Activated CD8-positive, alpha-beta T cell treated with anti-CD3 and anti-CD28 coated beads, Interleukin-2, amount 10 ng/mL, durations not matched to agents 7 days and 5 days (primary cell): ENCODE measurements at regions of chr11 and their contacts with region 1.

Region 1: GRCh38 chr11:129992161-129992944 is 10.3 kb downstream of the PRDM10 start:
- DNase-seq: peak; percentile 53
- ATAC-seq: peak; percentile 68
- H3K4me3 Mint-ChIP-seq: no peak overlapping the region
- H3K27ac Mint-ChIP-seq: no peak overlapping the region
- H3K4me1 Mint-ChIP-seq: peaks cover 8% of the 10 kb centered on the region
- H3K27me3 Mint-ChIP-seq: no peaks in the 10 kb centered on the region

Region 2: DNA sequence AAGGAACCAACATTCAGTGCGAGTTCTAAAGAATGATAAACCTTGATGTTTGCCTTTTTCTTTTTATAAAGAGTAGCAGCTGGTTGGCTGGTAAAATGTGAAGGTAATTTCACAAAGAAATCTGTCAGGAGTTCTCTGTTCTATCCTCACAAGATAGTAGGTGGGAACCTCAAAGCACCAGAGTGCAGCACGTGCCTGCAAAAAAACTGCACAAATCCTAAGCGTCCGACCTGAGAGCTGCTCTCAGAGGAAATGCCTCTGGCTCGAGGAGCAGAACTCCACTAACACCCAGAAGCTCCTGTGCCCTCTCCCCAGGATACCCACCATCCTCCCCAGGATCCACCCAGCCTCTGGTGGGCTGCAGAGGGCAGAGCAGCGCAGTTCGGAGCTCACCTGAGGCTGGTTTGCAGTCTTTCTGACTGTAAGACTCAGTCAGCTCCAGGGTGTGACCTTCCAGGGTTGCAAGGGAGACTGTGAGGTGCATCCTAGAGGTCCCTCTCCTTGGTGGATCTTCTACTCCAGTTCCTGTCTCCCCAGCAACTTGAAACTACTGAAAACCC is 13.2 kb before region 1 on chr11:
- CTCF ChIA-PET with region 1: interaction called, 19 read pairs
- POLR2A ChIA-PET with region 1: no interaction called
- DNase-seq: no peak
- ATAC-seq: no peak
- H3K4me3 Mint-ChIP-seq: no peak overlapping the region
- H3K27ac Mint-ChIP-seq: no peak overlapping the region
- H3K4me1 Mint-ChIP-seq: no peaks in the 10 kb centered on the region
- H3K27me3 Mint-ChIP-seq: no peaks in the 10 kb centered on the region

Region 3: DNA sequence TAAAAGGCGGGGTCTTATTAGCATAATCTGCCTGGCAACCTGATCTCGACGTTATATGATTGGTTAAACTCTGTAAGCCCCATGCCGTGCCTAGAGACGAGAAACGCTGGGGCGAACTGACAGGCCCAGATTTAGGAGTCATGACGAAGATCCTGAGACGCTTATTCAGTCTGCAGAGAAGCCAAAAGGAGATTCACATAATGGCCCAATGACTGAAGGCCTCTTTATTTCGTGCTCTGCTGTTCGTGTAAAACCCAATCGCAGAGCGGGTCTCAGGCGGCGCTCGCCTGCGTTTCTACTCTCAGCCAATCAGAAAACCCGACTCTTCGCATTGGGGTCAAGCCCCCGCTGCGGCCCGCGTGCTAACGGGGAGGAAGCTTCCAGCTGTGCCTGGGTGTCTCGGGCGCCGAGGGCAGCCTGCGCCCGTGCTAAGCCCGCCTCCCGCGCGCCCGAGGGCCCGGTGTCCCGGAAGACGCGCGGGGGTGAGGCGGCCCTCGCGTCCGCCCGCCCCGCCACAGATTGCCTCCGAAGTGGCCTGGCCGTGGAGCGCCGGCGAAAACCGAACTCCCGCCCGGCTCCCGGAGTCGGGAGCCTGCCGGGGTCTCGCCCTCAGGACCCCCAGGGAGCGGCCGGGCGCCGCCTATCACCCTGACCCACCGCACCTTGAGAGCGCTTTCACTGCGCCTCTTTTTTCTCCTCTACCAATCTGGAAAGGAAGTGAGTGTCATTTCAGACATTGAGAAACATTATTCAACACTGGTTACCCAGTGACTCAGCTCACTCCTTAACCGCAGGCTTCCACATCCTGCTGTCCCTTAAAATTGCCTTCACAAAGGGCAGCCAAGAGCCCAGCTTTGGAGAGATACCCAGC is 10.7 kb after region 1 on chr11:
- CTCF ChIA-PET with region 1: interaction called, 14 read pairs
- POLR2A ChIA-PET with region 1: interaction called, 19 read pairs
- DNase-seq: peak; percentile 94
- ATAC-seq: peak; percentile 80
- H3K4me3 Mint-ChIP-seq: peak overlapping the region; percentile 97
- H3K27ac Mint-ChIP-seq: peak overlapping the region; percentile 100
- H3K4me1 Mint-ChIP-seq: peaks cover 17% of the 10 kb centered on the region
- H3K27me3 Mint-ChIP-seq: peaks cover 5% of the 10 kb centered on the region

Region 4: GRCh38 chr11:130237282-130238006 is 245.1 kb after region 1 on chr11:
- CTCF ChIA-PET with region 1: no interaction called
- POLR2A ChIA-PET with region 1: no interaction called
- DNase-seq: no peak
- ATAC-seq: no peak
- H3K4me3 Mint-ChIP-seq: no peak overlapping the region
- H3K27ac Mint-ChIP-seq: no peak overlapping the region
- H3K4me1 Mint-ChIP-seq: peaks cover 2% of the 10 kb centered on the region
- H3K27me3 Mint-ChIP-seq: no peaks in the 10 kb centered on the region